Activated CD4-positive, alpha-beta T cell treated with anti-CD3 and anti-CD28 coated beads for 36 hours (primary cell): ENCODE measurements at regions of chr18 and their contacts with region 1.

Region 1: GRCh38 chr18:9913526-9914333 is at the start of gene VAPA:
- DNase-seq: peak; percentile 96
- ATAC-seq: peak; percentile 86
- H3K4me3 Mint-ChIP-seq: peak within 1 kb of the TSS; percentile 89
- H3K27ac Mint-ChIP-seq: peak within 1 kb of the TSS; percentile 93
- H3K4me1 Mint-ChIP-seq: peaks cover 20% of the 10 kb centered on the region
- H3K27me3 Mint-ChIP-seq: peaks cover 5% of the 10 kb centered on the region
- total RNA-seq, gene VAPA: 156 to 220 TPM

Region 2: GRCh38 chr18:8704361-8705279 is 1209.1 kb before region 1 on chr18:
- CTCF ChIA-PET with region 1: interaction called, 3 read pairs
- POLR2A ChIA-PET with region 1: no interaction called
- intact Hi-C with region 1: loop called in 1 of 2 experiments (anchors 2 kb)
- DNase-seq: peak; percentile 90
- ATAC-seq: peak; percentile 98
- H3K4me3 Mint-ChIP-seq: peak overlapping the region; percentile 80
- H3K27ac Mint-ChIP-seq: no peak overlapping the region
- H3K4me1 Mint-ChIP-seq: peaks cover 12% of the 10 kb centered on the region
- H3K27me3 Mint-ChIP-seq: peaks cover 47% of the 10 kb centered on the region

Region 3: GRCh38 chr18:9474983-9475642 is 438.6 kb before region 1 on chr18 and contains the start of gene RALBP1:
- CTCF ChIA-PET with region 1: no interaction called
- POLR2A ChIA-PET with region 1: no interaction called
- intact Hi-C with region 1: loop called (anchors 1 to 5 kb)
- DNase-seq: peak; percentile 99
- ATAC-seq: peak; percentile 98
- H3K4me3 Mint-ChIP-seq: peak within 1 kb of the TSS; percentile 85
- H3K27ac Mint-ChIP-seq: peak within 1 kb of the TSS; percentile 92
- H3K4me1 Mint-ChIP-seq: peaks cover 16% of the 10 kb centered on the region
- H3K27me3 Mint-ChIP-seq: peaks cover 8% of the 10 kb centered on the region
- total RNA-seq, gene RALBP1: 49.4 to 51.1 TPM

Region 4: DNA sequence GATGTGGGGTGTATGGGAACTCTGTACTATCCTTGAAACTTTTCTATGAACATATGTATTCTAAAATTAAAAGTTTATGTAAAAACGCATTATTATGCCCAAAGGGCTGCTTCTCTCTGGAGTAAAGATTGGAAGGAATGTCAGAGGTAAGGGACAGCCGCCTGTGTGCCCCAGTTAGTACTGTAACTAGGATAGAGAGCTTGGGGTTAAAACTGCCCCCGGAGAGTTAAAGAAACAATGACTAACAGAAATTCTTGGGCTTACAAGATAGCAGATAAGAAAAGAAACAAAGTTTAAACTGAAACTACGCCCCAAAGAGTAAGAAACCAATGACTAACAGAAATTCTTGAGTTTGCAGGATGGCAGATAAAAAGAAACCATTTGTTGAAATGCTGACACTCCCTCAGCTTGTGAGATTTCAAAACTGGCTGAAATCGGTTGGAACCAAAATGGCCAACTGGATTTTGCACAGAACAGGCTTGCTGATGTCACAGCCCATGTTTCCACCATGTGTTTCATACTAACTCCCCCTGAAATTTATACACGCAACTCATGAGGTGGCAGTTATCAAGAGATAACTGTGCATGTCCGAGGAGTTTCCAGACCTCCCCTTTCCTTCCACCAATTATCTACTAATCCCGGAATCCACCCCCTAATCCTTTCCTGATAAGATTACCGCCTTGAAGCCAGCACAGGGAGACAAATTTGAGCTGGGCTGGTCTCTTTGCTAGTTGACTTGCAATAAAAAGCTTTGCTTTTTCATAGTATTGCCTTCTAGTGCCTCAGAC is 36.7 kb before region 1 on chr18:
- CTCF ChIA-PET with region 1: no interaction called
- POLR2A ChIA-PET with region 1: no interaction called
- intact Hi-C with region 1: loop called in 1 of 2 experiments (anchors 2 kb)
- DNase-seq: peak; percentile 50
- ATAC-seq: peak; percentile 90
- H3K4me3 Mint-ChIP-seq: no peak overlapping the region
- H3K27ac Mint-ChIP-seq: peak overlapping the region; percentile 3
- H3K4me1 Mint-ChIP-seq: peaks cover 13% of the 10 kb centered on the region
- H3K27me3 Mint-ChIP-seq: peaks cover 3% of the 10 kb centered on the region

Region 5: GRCh38 chr18:9894454-9895068 is 19.2 kb before region 1 on chr18:
- CTCF ChIA-PET with region 1: no interaction called
- POLR2A ChIA-PET with region 1: no interaction called
- intact Hi-C with region 1: no loop called
- DNase-seq: no peak
- ATAC-seq: peak; percentile 33
- H3K4me3 Mint-ChIP-seq: no peak overlapping the region
- H3K27ac Mint-ChIP-seq: no peak overlapping the region
- H3K4me1 Mint-ChIP-seq: peaks cover 6% of the 10 kb centered on the region
- H3K27me3 Mint-ChIP-seq: no peaks in the 10 kb centered on the region

Region 6: DNA sequence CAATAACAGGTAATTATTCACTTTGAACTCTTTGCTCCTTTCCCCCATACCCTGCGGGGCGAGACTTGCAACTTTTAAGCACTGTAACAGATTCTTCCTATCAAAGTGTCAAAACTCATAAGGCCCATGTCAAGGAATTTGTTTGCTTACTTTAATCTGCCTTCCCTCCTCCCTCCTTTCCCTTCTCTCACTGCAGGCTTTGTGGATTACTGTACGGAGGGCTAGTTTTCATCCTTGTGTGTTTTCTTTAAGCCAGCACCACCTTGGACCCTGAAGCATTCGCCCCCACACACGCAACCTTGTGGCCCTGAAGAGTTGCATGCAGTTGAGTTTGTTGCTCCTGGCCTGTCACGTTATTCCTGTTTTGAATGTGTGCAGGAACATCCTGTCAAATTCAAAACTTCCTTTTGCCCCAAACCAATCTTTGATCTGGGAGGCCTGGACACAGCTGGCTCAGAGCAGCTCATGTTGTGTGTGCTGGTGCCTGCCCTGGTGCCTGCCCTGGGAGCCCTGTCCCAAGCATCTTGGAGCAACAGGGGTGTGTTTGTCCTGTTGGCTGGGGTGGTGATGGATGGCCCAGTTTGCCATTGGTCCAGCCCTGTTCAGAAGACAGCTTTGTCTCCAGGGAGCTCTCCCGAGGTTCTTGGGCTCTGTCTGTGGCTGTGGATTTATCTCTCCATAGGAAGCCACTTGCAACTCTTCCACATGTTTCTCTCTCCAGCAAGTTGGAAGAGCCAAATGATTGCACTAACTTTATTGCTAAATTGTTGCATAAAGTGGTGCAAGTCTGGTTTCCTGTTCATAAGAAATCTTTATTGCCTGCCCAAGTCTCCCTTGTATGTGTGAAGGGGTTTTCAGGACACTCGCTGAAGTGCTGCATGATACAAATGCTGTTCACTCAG is 199.6 kb after region 1 on chr18:
- CTCF ChIA-PET with region 1: no interaction called
- POLR2A ChIA-PET with region 1: no interaction called
- intact Hi-C with region 1: no loop called
- DNase-seq: no peak
- ATAC-seq: no peak
- H3K4me3 Mint-ChIP-seq: no peak overlapping the region
- H3K27ac Mint-ChIP-seq: no peak overlapping the region
- H3K4me1 Mint-ChIP-seq: no peaks in the 10 kb centered on the region
- H3K27me3 Mint-ChIP-seq: no peaks in the 10 kb centered on the region

Region 7: GRCh38 chr18:10530852-10531251 is 617.1 kb after region 1 on chr18:
- CTCF ChIA-PET with region 1: no interaction called
- POLR2A ChIA-PET with region 1: no interaction called
- intact Hi-C with region 1: loop called (anchors 1 to 2 kb)
- DNase-seq: peak; percentile 75
- ATAC-seq: peak; percentile 64
- H3K4me3 Mint-ChIP-seq: no peak overlapping the region
- H3K27ac Mint-ChIP-seq: peak overlapping the region; percentile 97
- H3K4me1 Mint-ChIP-seq: peaks cover 40% of the 10 kb centered on the region
- H3K27me3 Mint-ChIP-seq: no peaks in the 10 kb centered on the region